ENCODE measurements at regions of chr10 and their contacts with region 1.

Region 1: DNA sequence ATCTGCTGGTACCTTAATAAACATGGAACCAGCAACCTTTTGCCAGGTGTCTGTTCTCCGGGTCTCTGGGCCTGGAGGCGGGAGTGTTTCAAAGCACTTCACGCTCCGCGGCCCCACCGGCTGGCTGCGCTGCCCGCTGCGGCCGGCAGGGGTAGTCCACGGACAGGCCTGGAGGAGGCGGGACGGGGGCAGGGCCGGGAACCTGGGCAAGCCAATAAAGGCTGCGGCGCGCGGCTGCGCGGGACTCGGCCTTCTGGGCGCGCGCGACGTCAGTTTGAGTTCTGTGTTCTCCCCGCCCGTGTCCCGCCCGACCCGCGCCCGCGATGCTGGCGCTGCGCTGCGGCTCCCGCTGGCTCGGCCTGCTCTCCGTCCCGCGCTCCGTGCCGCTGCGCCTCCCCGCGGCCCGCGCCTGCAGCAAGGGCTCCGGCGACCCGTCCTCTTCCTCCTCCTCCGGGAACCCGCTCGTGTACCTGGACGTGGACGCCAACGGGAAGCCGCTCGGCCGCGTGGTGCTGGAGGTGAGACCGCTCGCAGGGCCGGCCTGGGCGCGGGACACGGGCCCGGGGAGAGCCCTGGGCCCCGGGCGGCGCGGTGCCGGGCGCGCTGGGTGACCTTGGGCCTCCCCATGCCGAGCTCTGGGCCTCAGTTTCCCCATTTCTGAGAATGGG is at the start of gene PPIF:
- DNase-seq: peak; percentile 95
- ATAC-seq: peak; percentile 88
- H3K4me3 Mint-ChIP-seq: peak within 1 kb of the TSS; percentile 86
- H3K27ac Mint-ChIP-seq: peak within 1 kb of the TSS; percentile 92
- H3K4me1 Mint-ChIP-seq: peaks cover 73% of the 10 kb centered on the region
- H3K27me3 Mint-ChIP-seq: no peaks in the 10 kb centered on the region
- total RNA-seq, gene PPIF: 74.7 to 77.7 TPM

Region 2: DNA sequence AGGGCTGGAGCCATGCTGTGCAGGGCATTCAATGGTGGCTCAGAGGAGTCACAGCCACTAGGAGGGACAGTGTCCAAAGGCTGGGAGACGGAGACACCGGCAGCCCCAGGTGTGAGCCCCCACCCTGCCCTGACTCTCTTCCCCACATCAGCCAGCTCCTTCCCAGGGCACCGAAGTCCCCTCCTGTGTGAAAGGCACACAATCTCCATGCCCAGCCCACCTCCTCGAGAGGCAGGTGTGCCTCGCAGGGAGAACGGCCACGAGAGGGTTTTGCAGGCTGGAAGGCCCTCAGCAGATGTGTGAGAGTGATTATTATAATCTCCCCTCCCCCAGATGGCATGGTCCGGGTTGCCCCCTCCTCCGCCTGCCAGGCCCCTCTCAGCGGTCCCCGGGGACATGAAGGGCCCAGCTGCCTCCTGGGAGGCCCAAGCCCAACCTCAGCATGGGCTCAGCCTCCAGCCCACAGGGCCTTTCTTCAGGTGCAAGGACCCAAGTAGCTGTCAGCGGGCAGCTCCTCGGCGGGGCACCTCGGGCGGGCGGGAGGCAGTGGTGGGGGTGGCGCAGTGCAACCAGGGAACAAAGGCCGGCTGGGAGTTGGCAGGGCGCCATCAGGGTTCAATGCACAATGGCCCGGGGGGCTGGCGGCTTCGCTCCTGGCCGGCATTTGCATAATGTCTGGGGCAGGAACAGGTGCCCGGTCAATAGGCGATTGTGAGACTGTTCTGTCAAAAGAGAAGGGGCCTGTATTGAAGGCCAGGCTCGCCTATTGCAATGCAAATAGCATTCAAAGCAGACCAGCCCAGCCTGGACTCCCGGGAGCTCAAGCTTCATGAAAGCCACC is 433.9 kb before region 1 on chr10:
- CTCF ChIA-PET with region 1: no interaction called
- POLR2A ChIA-PET with region 1: no interaction called
- DNase-seq: no peak
- ATAC-seq: no peak
- H3K4me3 Mint-ChIP-seq: no peak overlapping the region
- H3K27ac Mint-ChIP-seq: no peak overlapping the region
- H3K4me1 Mint-ChIP-seq: no peaks in the 10 kb centered on the region
- H3K27me3 Mint-ChIP-seq: peaks cover 3% of the 10 kb centered on the region

Region 3: DNA sequence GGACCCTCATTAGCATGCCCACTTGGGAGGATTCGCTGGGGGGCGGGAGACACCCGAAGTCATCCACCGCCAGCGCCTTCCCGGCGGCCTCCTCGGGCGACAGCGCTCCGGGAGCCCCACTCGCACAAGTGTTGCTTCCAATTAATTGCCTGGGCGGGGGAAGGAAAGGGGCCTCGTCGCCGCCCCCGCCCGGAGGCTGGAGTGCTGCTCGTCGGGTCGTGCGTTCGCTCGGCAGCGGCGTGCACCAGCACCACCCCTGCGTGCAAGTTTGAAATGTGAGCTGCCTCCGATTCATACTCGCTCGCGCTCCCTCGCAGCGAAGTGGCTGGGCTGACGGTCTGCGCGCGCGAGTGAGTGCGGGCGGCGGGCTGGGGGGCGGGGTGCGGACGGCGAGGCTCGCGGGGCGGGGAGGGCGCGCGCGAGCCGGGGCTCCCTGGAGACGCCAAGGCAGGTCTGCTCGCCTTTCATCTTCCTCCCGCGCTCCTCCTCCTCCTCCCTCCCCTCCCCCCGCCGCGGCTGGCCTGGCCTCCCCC is 104.7 kb before region 1 on chr10:
- CTCF ChIA-PET with region 1: interaction called, 4 read pairs
- POLR2A ChIA-PET with region 1: interaction called, 18 read pairs
- DNase-seq: peak; percentile 80
- ATAC-seq: peak; percentile 48
- H3K4me3 Mint-ChIP-seq: peak overlapping the region; percentile 80
- H3K27ac Mint-ChIP-seq: peak overlapping the region; percentile 75
- H3K4me1 Mint-ChIP-seq: peaks cover 60% of the 10 kb centered on the region
- H3K27me3 Mint-ChIP-seq: no peaks in the 10 kb centered on the region

Region 4: DNA sequence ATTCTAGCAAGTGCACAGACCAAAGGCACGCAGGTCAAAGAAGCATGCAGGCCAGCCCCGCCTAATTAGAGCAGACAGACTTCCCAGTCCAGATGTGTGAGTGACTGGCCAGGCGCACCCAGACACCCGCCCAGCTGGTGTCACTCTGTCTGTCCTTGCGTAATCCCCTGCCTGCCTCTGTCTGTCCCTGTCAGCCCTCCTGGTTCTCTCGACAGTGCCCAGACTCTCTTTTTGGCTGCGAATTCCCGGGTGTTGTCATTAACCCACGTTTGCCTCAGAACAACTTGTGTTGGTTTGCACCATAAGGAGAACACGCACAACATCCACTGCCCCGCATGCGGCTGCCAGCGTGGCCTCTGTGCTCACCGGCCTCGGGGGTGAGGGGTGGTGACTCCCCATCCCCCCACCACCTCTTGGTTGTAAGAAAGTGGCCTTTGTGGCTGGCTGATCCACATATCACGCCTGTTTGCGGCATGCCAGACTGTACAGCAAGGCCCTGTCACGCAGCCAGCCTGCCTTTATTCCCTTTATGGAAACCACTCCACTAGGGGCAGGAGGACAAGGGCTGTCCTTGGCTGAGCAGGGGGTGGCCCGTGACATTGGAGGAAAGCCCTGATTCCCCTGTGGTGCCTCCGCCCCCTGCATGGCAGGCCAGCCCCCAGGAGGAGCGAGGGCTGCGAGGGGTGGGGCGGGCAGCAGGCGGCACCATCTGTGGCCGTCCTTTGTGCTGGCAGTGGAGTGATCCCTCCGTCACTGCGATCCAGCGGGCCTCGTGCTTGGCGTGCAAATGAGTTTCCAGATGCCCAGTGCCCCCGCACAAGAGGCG is 72.9 kb before region 1 on chr10:
- CTCF ChIA-PET with region 1: no interaction called
- POLR2A ChIA-PET with region 1: no interaction called
- DNase-seq: no peak
- ATAC-seq: no peak
- H3K4me3 Mint-ChIP-seq: no peak overlapping the region
- H3K27ac Mint-ChIP-seq: no peak overlapping the region
- H3K4me1 Mint-ChIP-seq: peaks cover 3% of the 10 kb centered on the region
- H3K27me3 Mint-ChIP-seq: no peaks in the 10 kb centered on the region

Region 5: DNA sequence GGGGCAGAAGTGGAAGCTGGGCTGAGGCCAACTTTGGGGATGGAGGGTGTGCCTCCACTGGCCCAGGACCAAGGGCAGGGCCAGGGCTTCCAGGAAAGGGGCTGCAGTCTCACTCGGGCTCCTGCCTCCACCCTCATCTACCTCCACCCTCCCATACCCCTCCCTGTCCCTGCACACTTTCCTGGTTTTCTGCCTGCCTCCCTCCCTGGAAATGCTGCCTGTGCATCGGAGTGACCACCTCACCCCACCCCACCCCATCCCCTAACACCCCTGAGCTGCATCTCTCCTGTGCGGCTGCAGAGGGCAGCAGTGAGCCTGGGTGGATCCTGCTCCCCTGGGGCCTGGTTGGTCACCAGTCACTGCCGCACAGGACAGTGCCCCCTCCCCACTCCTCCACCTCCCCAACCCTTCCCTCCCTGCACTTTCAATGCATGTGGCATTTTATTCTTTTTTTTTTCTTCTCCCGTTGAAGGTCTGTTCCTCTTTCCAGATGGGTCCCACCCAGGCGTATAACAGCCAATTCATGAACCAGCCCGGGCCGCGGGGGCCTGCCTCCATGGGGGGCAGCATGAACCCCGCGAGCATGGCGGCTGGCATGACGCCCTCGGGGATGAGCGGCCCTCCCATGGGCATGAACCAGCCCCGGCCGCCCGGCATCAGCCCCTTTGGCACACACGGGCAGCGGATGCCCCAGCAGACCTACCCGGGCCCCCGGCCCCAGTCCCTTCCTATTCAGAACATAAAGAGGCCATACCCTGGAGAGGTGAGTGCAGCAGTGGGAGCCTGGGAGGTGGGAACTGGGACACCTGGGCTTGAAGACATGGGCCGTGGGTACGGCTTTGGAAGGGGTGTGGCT is 54.2 kb before region 1 on chr10:
- CTCF ChIA-PET with region 1: interaction called, 24 read pairs
- POLR2A ChIA-PET with region 1: interaction called, 3 read pairs
- DNase-seq: peak; percentile 47
- ATAC-seq: peak; percentile 54
- H3K4me3 Mint-ChIP-seq: no peak overlapping the region
- H3K27ac Mint-ChIP-seq: peak overlapping the region; percentile 21
- H3K4me1 Mint-ChIP-seq: peaks cover 42% of the 10 kb centered on the region
- H3K27me3 Mint-ChIP-seq: no peaks in the 10 kb centered on the region

Region 6: GRCh38 chr10:79316671-79317431 is 30.5 kb before region 1 on chr10:
- CTCF ChIA-PET with region 1: interaction called, 55 read pairs
- POLR2A ChIA-PET with region 1: interaction called, 162 read pairs
- DNase-seq: peak; percentile 51
- ATAC-seq: peak; percentile 50
- H3K4me3 Mint-ChIP-seq: peak overlapping the region; percentile 71
- H3K27ac Mint-ChIP-seq: peak overlapping the region; percentile 95
- H3K4me1 Mint-ChIP-seq: peaks cover 65% of the 10 kb centered on the region
- H3K27me3 Mint-ChIP-seq: no peaks in the 10 kb centered on the region

Region 7: GRCh38 chr10:79322616-79323543 is 24.5 kb before region 1 on chr10:
- CTCF ChIA-PET with region 1: interaction called, 55 read pairs
- POLR2A ChIA-PET with region 1: interaction called, 162 read pairs
- DNase-seq: peak; percentile 88
- ATAC-seq: peak; percentile 93
- H3K4me3 Mint-ChIP-seq: peak overlapping the region; percentile 69
- H3K27ac Mint-ChIP-seq: peak overlapping the region; percentile 98
- H3K4me1 Mint-ChIP-seq: peaks cover 72% of the 10 kb centered on the region
- H3K27me3 Mint-ChIP-seq: no peaks in the 10 kb centered on the region

Region 8: GRCh38 chr10:79331709-79332108 is 15.7 kb before region 1 on chr10:
- CTCF ChIA-PET with region 1: interaction called, 33 read pairs
- POLR2A ChIA-PET with region 1: interaction called, 21 read pairs
- DNase-seq: peak; percentile 60
- ATAC-seq: peak; percentile 75
- H3K4me3 Mint-ChIP-seq: no peak overlapping the region
- H3K27ac Mint-ChIP-seq: peak overlapping the region; percentile 47
- H3K4me1 Mint-ChIP-seq: peaks cover 16% of the 10 kb centered on the region
- H3K27me3 Mint-ChIP-seq: no peaks in the 10 kb centered on the region

Region 9: GRCh38 chr10:79358783-79359182 is 11.4 kb after region 1 on chr10:
- CTCF ChIA-PET with region 1: interaction called, 6 read pairs
- POLR2A ChIA-PET with region 1: interaction called, 11 read pairs
- DNase-seq: no peak
- ATAC-seq: no peak
- H3K4me3 Mint-ChIP-seq: no peak overlapping the region
- H3K27ac Mint-ChIP-seq: no peak overlapping the region
- H3K4me1 Mint-ChIP-seq: peaks cover 42% of the 10 kb centered on the region
- H3K27me3 Mint-ChIP-seq: peaks cover 10% of the 10 kb centered on the region

Region 10: DNA sequence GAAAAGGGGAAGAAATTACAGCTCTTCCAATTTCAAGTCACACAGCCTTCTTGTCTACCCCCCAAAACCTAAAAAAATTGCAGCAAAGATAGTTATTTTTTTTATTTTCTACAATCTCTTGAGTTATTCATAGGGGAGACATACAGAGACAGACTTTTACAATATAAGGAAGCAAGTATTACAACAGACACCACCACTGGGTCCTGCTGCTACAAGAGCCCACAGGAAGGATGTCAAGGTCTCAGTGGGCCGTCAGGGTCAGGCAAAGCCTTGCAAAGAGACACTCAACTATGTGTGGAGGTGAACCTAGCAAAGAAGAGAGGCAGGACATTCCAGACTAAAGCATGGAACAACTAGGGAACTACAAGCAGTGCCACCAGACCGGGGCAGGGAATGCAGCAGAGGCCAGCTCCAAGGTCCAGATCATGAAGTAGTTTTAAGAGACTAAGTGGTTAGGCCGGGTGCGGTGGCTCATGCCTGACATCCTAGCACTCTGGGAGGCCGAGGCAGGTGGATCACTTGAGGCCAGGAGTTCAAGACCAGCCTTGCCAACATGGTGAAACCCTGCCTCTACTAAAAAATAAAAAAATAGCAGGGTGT is 126.2 kb after region 1 on chr10:
- CTCF ChIA-PET with region 1: no interaction called
- POLR2A ChIA-PET with region 1: no interaction called
- DNase-seq: no peak
- ATAC-seq: no peak
- H3K4me3 Mint-ChIP-seq: no peak overlapping the region
- H3K27ac Mint-ChIP-seq: no peak overlapping the region
- H3K4me1 Mint-ChIP-seq: no peaks in the 10 kb centered on the region
- H3K27me3 Mint-ChIP-seq: peaks cover 24% of the 10 kb centered on the region

Measured in activated CD8-positive, alpha-beta T cell treated with anti-CD3 and anti-CD28 coated beads, Interleukin-2, amount 10 ng/mL, durations not matched to agents 7 days and 5 days (primary cell).